CD8-positive, alpha-beta T cell (primary cell): ENCODE measurements at regions of chr7 and their contacts with region 1.

Region 1: GRCh38 chr7:96285579-96285978 is 36.3 kb downstream of the SLC25A13 start:
- DNase-seq: peak in 5 of 9 experiments; percentile 5 to 77 (median 30)
- ATAC-seq: peak; percentile 89
- H3K4me3 ChIP-seq: no peak overlapping the region
- H3K4me3 Mint-ChIP-seq: peak overlapping the region; percentile 33
- H3K27ac ChIP-seq: peak overlapping the region; percentile 3 to 77
- H3K27ac Mint-ChIP-seq: peak overlapping the region; percentile 88
- H3K4me1 ChIP-seq: peaks cover 19% of the 10 kb centered on the region
- H3K4me1 Mint-ChIP-seq: peaks cover 44% of the 10 kb centered on the region
- H3K27me3 ChIP-seq: no peaks in the 10 kb centered on the region
- H3K27me3 Mint-ChIP-seq: no peaks in the 10 kb centered on the region
- CTCF ChIP-seq: no peak

Region 2: DNA sequence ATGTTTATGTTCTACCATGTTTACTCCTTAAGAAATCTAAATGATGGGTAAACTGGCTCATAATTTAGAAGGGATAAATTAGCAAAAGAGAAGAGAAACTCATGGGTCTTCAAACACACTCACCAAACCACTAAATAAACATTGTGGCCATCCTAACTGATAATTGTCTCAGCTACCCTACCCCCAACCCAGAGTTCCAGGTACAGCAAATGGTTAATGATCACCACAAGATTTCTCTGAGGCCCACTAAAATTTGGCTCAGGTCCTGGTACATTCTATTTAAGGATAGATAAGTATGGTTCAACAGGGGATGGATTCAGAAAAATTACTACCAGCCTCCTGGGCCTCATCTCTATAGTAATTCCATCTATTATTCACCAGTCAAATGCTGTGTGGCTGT is 14.9 kb after region 1 on chr7:
- CTCF ChIA-PET with region 1: no interaction called
- POLR2A ChIA-PET with region 1: interaction called, 3 read pairs
- intact Hi-C with region 1: loop called in 1 of 2 experiments (anchors 2 kb)
- DNase-seq: no peak
- ATAC-seq: no peak
- H3K4me3 ChIP-seq: no peak overlapping the region
- H3K4me3 Mint-ChIP-seq: no peak overlapping the region
- H3K27ac ChIP-seq: no peak overlapping the region
- H3K27ac Mint-ChIP-seq: no peak overlapping the region
- H3K4me1 ChIP-seq: no peaks in the 10 kb centered on the region
- H3K4me1 Mint-ChIP-seq: peaks cover 32% of the 10 kb centered on the region
- H3K27me3 ChIP-seq: no peaks in the 10 kb centered on the region
- H3K27me3 Mint-ChIP-seq: no peaks in the 10 kb centered on the region
- CTCF ChIP-seq: no peak

Region 3: DNA sequence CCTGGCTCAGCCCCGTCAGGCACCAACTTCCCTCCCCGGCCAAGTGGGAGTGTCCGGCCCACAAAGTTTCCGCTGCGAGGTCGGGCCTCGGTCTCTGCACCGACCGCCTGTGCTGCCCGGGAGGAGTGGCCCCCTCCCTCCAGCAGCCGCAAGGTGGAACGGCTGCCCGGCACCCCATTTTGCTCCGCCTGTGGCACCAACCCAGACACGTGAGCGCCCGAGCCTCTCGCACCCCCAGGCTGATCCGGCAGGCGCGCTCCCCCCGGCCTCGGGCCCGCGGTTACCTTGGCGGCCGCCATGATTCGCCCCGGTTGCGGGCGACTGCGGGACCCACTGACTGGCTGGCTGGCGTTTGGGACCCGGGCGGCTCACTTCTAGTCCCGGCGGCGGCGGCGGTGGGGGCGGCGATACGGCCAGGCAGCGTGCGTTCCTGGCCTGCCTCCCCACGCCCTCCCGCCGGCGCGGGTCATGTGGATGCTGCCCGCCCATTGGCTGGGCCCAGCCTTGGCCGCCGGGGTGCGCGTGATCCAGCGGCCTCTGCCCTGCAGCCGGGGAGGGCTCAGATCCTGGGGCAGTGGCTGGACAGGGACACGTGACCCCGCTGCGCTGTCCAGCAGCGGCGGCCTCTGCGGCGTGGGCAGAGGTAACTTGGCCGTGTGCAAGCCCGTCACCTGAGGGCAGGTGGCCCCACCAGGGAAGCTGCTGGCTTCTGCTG is 36.2 kb after region 1 on chr7 and contains the start of gene SLC25A13:
- CTCF ChIA-PET with region 1: interaction called, 3 read pairs
- POLR2A ChIA-PET with region 1: no interaction called
- intact Hi-C with region 1: loop called (anchors 2 to 5 kb)
- DNase-seq: peak in 8 of 9 experiments; percentile 31 to 76 (median 60)
- ATAC-seq: peak; percentile 74
- H3K4me3 ChIP-seq: peak within 1 kb of the TSS; percentile 87 to 94
- H3K4me3 Mint-ChIP-seq: peak within 1 kb of the TSS; percentile 92
- H3K27ac ChIP-seq: peak within 1 kb of the TSS; percentile 61 to 83
- H3K27ac Mint-ChIP-seq: peak within 1 kb of the TSS; percentile 92
- H3K4me1 ChIP-seq: peaks cover 15% of the 10 kb centered on the region
- H3K4me1 Mint-ChIP-seq: peaks cover 29% of the 10 kb centered on the region
- H3K27me3 ChIP-seq: no peaks in the 10 kb centered on the region
- H3K27me3 Mint-ChIP-seq: no peaks in the 10 kb centered on the region
- CTCF ChIP-seq: no peak
- total RNA-seq, gene SLC25A13: 8.0 to 8.3 TPM